Activated B cell treated with CpG ODN at 0.5 μM for 24 hours (primary cell): ENCODE measurements at regions of chr6 and their contacts with region 1.

Region 1: GRCh38 chr6:119349323-119350042 is at the start of gene MAN1A1:
- DNase-seq: peak; percentile 96
- ATAC-seq: peak; percentile 85
- H3K4me3 Mint-ChIP-seq: peak within 1 kb of the TSS; percentile 93
- H3K27ac Mint-ChIP-seq: peak within 1 kb of the TSS; percentile 94
- H3K4me1 Mint-ChIP-seq: peaks cover 61% of the 10 kb centered on the region
- H3K27me3 Mint-ChIP-seq: no peaks in the 10 kb centered on the region
- CTCF ChIP-seq: no peak
- total RNA-seq, gene MAN1A1: 17.7 and 18.1 TPM in 2 replicates

Region 2: DNA sequence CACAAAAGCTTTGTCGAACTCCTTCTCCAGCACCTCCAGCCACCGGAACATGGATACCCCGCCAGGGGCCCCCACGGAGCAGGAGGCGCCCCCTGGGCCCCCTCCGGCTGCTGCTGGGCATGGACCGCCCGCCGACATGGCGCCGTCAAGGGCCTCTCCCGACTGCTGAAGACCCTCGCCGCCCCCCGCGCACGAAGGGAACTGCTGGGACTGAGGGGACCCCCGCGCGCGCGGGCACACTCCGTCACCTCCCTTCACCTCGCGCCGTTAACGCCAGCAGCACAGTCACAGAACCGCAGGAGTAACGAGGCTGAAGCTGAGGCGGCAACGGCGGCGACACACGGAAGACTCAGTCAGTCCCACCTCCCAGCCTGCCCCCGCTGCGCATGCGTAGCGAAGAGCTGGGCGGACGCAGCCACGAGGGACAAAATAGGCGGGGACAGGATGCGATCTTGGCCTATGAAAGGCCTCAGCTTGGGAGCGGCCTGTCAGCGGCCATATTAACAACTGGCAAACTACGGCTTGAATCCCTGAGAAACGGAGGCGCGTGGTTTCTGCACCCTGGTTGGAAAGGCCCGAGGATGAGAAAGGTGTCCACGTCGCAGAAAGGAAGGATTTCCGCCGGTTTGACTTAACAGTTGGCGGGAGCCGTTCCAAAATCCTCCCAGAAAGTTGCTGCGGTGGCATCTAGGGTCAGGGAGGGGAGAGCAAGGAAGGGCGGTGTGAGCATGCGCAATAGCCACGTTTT is 1747.2 kb before region 1 on chr6 and contains the start of gene GOPC:
- CTCF ChIA-PET with region 1: no interaction called
- POLR2A ChIA-PET with region 1: no interaction called
- intact Hi-C with region 1: loop called (anchors 2 kb)
- DNase-seq: peak; percentile 85
- ATAC-seq: peak; percentile 96
- H3K4me3 Mint-ChIP-seq: peak within 1 kb of the TSS; percentile 100
- H3K27ac Mint-ChIP-seq: peak within 1 kb of the TSS; percentile 99
- H3K4me1 Mint-ChIP-seq: peaks cover 46% of the 10 kb centered on the region
- H3K27me3 Mint-ChIP-seq: no peaks in the 10 kb centered on the region
- CTCF ChIP-seq: no peak
- total RNA-seq, gene GOPC: 17.1 and 19.5 TPM in 2 replicates

Region 3: DNA sequence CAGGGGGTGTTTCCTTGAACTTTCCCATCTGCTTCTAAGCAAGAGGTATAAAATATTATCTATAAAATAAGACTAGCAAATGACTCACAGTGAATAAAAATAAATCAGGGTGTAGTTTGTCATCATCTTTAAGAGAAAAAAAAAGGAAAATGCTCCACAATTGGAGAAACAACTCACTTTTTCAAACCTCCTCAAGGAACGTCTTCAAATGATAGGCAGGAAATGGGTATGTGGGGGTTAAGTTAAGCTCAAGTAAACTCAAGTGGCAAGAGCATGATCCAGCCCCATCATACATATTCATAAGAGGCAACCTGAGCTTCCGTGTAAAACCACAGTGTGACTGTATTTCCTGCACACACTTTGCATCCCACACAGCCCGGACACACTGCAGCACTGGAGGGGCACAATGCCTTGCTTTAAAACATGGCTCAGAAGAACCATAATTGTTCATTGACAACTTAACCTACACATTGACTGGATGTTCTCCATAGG is 639.6 kb before region 1 on chr6:
- CTCF ChIA-PET with region 1: no interaction called
- POLR2A ChIA-PET with region 1: interaction called, 3 read pairs
- intact Hi-C with region 1: loop called (anchors 10 kb)
- DNase-seq: no peak
- ATAC-seq: peak; percentile 92
- H3K4me3 Mint-ChIP-seq: peak overlapping the region; percentile 95
- H3K27ac Mint-ChIP-seq: peak overlapping the region; percentile 98
- H3K4me1 Mint-ChIP-seq: peaks cover 62% of the 10 kb centered on the region
- H3K27me3 Mint-ChIP-seq: no peaks in the 10 kb centered on the region
- CTCF ChIP-seq: no peak

Region 4: GRCh38 chr6:119078376-119079282 is 270.9 kb before region 1 on chr6 and contains the start of gene FAM184A:
- CTCF ChIA-PET with region 1: no interaction called
- POLR2A ChIA-PET with region 1: no interaction called
- intact Hi-C with region 1: loop called (anchors 2 kb)
- DNase-seq: peak; percentile 61
- ATAC-seq: peak; percentile 83
- H3K4me3 Mint-ChIP-seq: peak within 1 kb of the TSS; percentile 93
- H3K27ac Mint-ChIP-seq: no peak within 1 kb of the TSS
- H3K4me1 Mint-ChIP-seq: peaks cover 17% of the 10 kb centered on the region
- H3K27me3 Mint-ChIP-seq: peaks cover 16% of the 10 kb centered on the region
- CTCF ChIP-seq: no peak
- total RNA-seq, gene FAM184A: 0.24 and 1.1 TPM in 2 replicates

Region 5: DNA sequence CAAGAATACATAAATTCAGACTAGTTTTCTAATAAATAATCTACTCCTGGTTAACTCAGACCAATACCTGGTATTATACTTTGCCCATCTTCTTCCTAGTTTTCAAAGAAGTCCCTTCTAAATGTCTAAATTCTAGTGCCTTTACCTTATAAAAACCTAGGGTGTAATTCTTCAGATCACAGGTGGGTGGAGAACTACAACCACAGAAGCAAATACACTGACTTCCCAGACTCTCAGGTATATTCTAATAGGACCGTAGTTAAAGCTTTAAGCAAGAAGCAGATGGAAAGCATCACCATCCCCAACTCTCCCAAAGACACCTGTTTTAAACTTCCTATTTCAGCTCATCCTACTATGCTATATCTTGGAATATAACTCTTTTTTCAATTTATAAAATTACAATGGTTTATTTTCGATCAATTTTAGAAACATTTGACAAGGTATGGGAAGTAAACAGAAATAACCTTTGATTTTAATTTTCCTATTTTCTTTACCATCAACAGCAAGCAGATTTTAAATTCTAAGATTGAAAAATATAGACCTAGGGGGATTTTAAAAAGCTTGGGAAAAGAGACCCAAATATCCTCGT is 15.7 kb before region 1 on chr6:
- CTCF ChIA-PET with region 1: interaction called, 12 read pairs
- POLR2A ChIA-PET with region 1: interaction called, 4 read pairs
- intact Hi-C with region 1: loop called (anchors 2 kb)
- DNase-seq: no peak
- ATAC-seq: peak; percentile 71
- H3K4me3 Mint-ChIP-seq: no peak overlapping the region
- H3K27ac Mint-ChIP-seq: no peak overlapping the region
- H3K4me1 Mint-ChIP-seq: peaks cover 40% of the 10 kb centered on the region
- H3K27me3 Mint-ChIP-seq: no peaks in the 10 kb centered on the region
- CTCF ChIP-seq: no peak

Region 6: GRCh38 chr6:119533603-119534279 is 184.3 kb after region 1 on chr6:
- CTCF ChIA-PET with region 1: no interaction called
- POLR2A ChIA-PET with region 1: interaction called, 3 read pairs
- intact Hi-C with region 1: loop called (anchors 2 kb)
- DNase-seq: no peak
- ATAC-seq: peak; percentile 84
- H3K4me3 Mint-ChIP-seq: peak overlapping the region; percentile 30
- H3K27ac Mint-ChIP-seq: peak overlapping the region; percentile 76
- H3K4me1 Mint-ChIP-seq: peaks cover 20% of the 10 kb centered on the region
- H3K27me3 Mint-ChIP-seq: no peaks in the 10 kb centered on the region
- CTCF ChIP-seq: no peak

Region 7: GRCh38 chr6:119978274-119978889 is 628.9 kb after region 1 on chr6:
- CTCF ChIA-PET with region 1: interaction called, 4 read pairs
- POLR2A ChIA-PET with region 1: no interaction called
- intact Hi-C with region 1: loop called (anchors 1 kb)
- DNase-seq: no peak
- ATAC-seq: peak; percentile 52
- H3K4me3 Mint-ChIP-seq: no peak overlapping the region
- H3K27ac Mint-ChIP-seq: no peak overlapping the region
- H3K4me1 Mint-ChIP-seq: no peaks in the 10 kb centered on the region
- H3K27me3 Mint-ChIP-seq: no peaks in the 10 kb centered on the region
- CTCF ChIP-seq: peak; percentile 21